CD4-positive, alpha-beta memory T cell (primary cell): ENCODE measurements at regions of chr1 and their contacts with region 1.

Region 1: GRCh38 chr1:173095632-173096031 is 44.9 kb upstream of the TNFSF18 start:
- DNase-seq: no peak
- H3K4me3 ChIP-seq: no peak overlapping the region
- H3K4me3 Mint-ChIP-seq: no peak overlapping the region
- H3K27ac ChIP-seq: no peak overlapping the region
- H3K27ac Mint-ChIP-seq: no peak overlapping the region
- H3K4me1 ChIP-seq: no peaks in the 10 kb centered on the region
- H3K4me1 Mint-ChIP-seq: peaks cover 0 to 1% (median 0%) of the 10 kb centered on the region in 4 donors
- H3K27me3 ChIP-seq: no peaks in the 10 kb centered on the region
- H3K27me3 Mint-ChIP-seq: no peaks in the 10 kb centered on the region

Region 2: DNA sequence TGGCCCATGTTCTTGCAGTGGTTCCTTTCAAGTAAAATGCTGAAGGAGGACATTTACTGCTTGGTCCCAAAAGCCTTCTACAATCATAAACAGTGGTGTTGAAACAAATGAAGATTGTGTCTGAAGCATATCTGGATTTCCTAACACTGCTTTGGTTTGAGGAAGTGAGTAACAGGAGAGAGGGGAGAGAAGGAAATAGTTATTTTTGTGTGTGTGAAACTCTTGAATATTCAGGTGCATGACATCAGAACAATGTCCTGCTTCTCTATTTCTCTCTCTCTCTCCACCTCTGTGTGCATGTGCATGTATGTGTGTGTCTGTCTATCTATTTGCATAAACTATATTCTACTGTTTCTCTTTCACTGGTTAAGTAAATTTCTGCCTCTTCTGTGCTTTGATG is 16.5 kb after region 1 on chr1:
- CTCF ChIA-PET with region 1: no interaction called
- POLR2A ChIA-PET with region 1: no interaction called
- intact Hi-C with region 1: loop called (anchors 1 kb)
- DNase-seq: no peak
- H3K4me3 ChIP-seq: no peak overlapping the region
- H3K4me3 Mint-ChIP-seq: no peak overlapping the region
- H3K27ac ChIP-seq: no peak overlapping the region
- H3K27ac Mint-ChIP-seq: no peak overlapping the region
- H3K4me1 ChIP-seq: no peaks in the 10 kb centered on the region
- H3K4me1 Mint-ChIP-seq: no peaks in the 10 kb centered on the region
- H3K27me3 ChIP-seq: no peaks in the 10 kb centered on the region
- H3K27me3 Mint-ChIP-seq: no peaks in the 10 kb centered on the region

Region 3: GRCh38 chr1:173122958-173123852 is 27.6 kb after region 1 on chr1:
- CTCF ChIA-PET with region 1: no interaction called
- POLR2A ChIA-PET with region 1: no interaction called
- intact Hi-C with region 1: no loop called
- DNase-seq: peak in 1 of 5 donors; percentile 0
- H3K4me3 ChIP-seq: no peak overlapping the region
- H3K4me3 Mint-ChIP-seq: peak overlapping the region in 3 of 8 donors; percentile 2 to 27 (median 16)
- H3K27ac ChIP-seq: no peak overlapping the region
- H3K27ac Mint-ChIP-seq: no peak overlapping the region
- H3K4me1 ChIP-seq: no peaks in the 10 kb centered on the region
- H3K4me1 Mint-ChIP-seq: peaks cover 0 to 6% (median 0%) of the 10 kb centered on the region in 4 donors
- H3K27me3 ChIP-seq: no peaks in the 10 kb centered on the region
- H3K27me3 Mint-ChIP-seq: no peaks in the 10 kb centered on the region